HepG2 (cell line): ENCODE measurements at regions of chr5 and their contacts with region 1.

Region 1: DNA sequence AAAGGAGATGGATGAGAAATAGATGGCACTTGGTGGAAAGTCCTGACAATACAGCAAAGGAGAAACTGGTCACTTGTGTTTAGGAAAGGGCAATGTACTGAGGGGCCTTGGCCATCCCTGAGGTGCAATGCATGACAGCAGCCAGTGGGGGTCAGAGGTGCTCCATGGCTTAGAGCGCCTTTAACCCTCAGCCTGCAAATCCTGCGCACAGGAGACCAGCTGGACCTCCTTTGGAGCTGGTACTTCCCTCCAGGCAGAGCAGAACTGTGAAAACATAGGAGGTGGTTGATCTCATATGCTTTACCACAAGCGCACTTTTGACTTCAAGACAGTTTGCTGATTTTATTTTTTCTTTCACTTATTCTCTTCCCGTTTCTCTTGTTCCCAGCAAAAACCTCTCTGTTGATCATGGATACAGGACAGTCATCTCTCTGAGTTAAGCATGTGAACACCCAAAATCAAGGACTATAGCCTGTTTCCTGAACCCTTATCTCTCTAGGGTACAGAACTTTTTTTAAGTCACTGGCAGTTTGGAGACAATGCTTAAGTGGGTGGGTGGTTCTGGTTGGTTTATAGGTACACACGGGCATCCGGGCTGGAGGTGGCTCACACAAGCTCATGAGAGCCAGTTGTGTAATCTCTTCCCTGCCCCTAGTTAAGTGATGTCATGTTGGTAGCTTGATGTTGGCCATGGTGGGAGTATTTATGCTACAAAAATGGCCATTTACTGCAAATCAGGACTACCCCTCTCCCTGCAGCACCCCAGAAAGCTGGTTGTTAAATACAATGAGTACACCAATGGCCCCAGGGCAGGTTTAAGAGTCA is 37.6 kb upstream of the ANKRD55 start:
- DNase-seq: peak; percentile 73
- ATAC-seq: peak; percentile 99
- H3K4me3 ChIP-seq: no peak overlapping the region
- H3K27ac ChIP-seq: no peak overlapping the region
- H3K4me1 ChIP-seq: peaks cover 34% of the 10 kb centered on the region
- H3K27me3 ChIP-seq: no peaks in the 10 kb centered on the region
- CTCF ChIP-seq: peak; percentile 97
- EP300 ChIP-seq: no peak
- POLR2A ChIP-seq: no peak
- RAD21 ChIP-seq: peak; percentile 98

Region 2: DNA sequence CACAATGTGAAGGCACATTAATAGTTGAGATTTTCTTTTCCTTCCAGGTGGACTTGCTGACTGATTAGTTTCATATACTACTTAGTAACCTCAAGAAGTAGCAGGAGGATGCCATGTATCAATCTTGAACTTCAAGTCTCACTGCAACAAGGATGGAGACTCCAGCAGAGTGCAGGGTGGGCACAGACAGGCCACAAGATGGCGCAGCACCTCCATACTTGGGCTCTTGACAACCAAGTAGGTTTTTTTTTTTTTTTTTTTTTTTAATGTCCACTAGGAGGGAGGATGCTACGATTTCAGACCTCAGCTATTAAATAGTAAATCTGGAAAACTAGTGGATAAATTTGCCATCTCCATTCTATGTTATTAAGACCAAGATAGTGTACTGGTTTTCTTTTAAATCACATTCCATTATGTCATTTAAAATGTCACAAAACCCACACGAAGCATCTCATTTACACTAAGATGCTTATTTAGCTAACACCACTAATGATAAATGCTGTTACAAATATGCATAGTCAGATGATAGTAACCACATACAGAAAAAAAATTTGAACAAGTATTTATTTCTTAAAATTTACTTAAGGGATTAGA is 334.6 kb before region 1 on chr5:
- CTCF ChIA-PET with region 1: interaction called, 22 read pairs
- POLR2A ChIA-PET with region 1: no interaction called
- in situ Hi-C with region 1: no loop called
- intact Hi-C with region 1: loop called (anchors 1 kb)
- DNase-seq: peak; percentile 65
- ATAC-seq: peak; percentile 12
- H3K4me3 ChIP-seq: no peak overlapping the region
- H3K27ac ChIP-seq: no peak overlapping the region
- H3K4me1 ChIP-seq: peaks cover 49% of the 10 kb centered on the region
- H3K27me3 ChIP-seq: no peaks in the 10 kb centered on the region
- CTCF ChIP-seq: peak; percentile 85
- EP300 ChIP-seq: no peak
- POLR2A ChIP-seq: no peak
- RAD21 ChIP-seq: peak; percentile 65

Region 3: DNA sequence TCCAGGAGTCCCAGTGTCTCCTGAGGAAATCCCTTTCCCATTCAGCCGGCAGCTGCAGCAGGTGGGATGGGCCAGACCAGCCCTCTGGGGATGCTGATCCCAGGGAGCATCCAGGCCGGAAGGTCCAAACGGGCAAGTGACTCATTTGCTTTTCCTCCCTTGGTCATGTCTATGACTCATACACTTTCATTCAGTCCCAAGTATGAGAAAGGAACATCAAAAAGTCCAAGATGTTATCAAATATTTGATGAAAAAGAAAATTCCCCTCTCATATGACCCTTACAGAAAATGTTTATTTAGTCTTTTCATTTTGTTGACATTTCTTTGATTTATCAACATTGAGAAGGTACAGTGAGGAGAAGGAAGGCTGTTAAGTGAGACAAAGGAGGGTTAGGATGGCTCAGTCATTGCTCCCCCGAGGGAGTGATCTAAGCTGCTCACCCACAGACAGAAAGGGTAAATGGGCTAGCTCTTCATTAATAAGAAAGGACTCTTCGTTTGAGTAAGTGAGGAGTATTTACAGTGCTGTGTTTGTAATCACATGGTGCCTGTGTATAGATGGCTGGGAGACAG is 79.9 kb after region 1 on chr5:
- CTCF ChIA-PET with region 1: no interaction called
- POLR2A ChIA-PET with region 1: no interaction called
- in situ Hi-C with region 1: no loop called
- intact Hi-C with region 1: loop called (anchors 2 kb)
- DNase-seq: peak; percentile 92
- ATAC-seq: peak; percentile 95
- H3K4me3 ChIP-seq: no peak overlapping the region
- H3K27ac ChIP-seq: peak overlapping the region; percentile 44
- H3K4me1 ChIP-seq: peaks cover 72% of the 10 kb centered on the region
- H3K27me3 ChIP-seq: no peaks in the 10 kb centered on the region
- CTCF ChIP-seq: no peak
- EP300 ChIP-seq: peak in 1 of 2 experiments; percentile 90; a peak in 2 of 4 replicates
- POLR2A ChIP-seq: no peak
- RAD21 ChIP-seq: no peak

Region 4: GRCh38 chr5:56447232-56447631 is 176.5 kb after region 1 on chr5:
- CTCF ChIA-PET with region 1: no interaction called
- POLR2A ChIA-PET with region 1: no interaction called
- in situ Hi-C with region 1: no loop called
- intact Hi-C with region 1: loop called (anchors 2 kb)
- DNase-seq: peak; percentile 93
- ATAC-seq: peak; percentile 99
- H3K4me3 ChIP-seq: peak overlapping the region in 1 of 3 experiments; percentile 14; a peak in 1 of 6 replicates
- H3K27ac ChIP-seq: peak overlapping the region; percentile 58
- H3K4me1 ChIP-seq: peaks cover 44% of the 10 kb centered on the region
- H3K27me3 ChIP-seq: no peaks in the 10 kb centered on the region
- CTCF ChIP-seq: no peak
- EP300 ChIP-seq: peak in 1 of 2 experiments; percentile 79; a peak in 2 of 4 replicates
- POLR2A ChIP-seq: no peak
- RAD21 ChIP-seq: peak; percentile 40; the same call in 1 of the 2 replicates

Region 5: GRCh38 chr5:56638061-56638621 is 367.4 kb after region 1 on chr5:
- CTCF ChIA-PET with region 1: no interaction called
- POLR2A ChIA-PET with region 1: no interaction called
- in situ Hi-C with region 1: no loop called
- intact Hi-C with region 1: loop called (anchors 1 kb)
- DNase-seq: peak; percentile 94
- ATAC-seq: peak; percentile 92
- H3K4me3 ChIP-seq: peak overlapping the region in 2 of 3 experiments; percentile 24 to 41; a peak in 2 of 6 replicates
- H3K27ac ChIP-seq: peak overlapping the region; percentile 89
- H3K4me1 ChIP-seq: peaks cover 72% of the 10 kb centered on the region
- H3K27me3 ChIP-seq: no peaks in the 10 kb centered on the region
- CTCF ChIP-seq: no peak
- EP300 ChIP-seq: peak in 1 of 2 experiments; percentile 71; a peak in 2 of 4 replicates
- POLR2A ChIP-seq: no peak
- RAD21 ChIP-seq: no peak

Region 6: GRCh38 chr5:56838409-56839039 is 567.7 kb after region 1 on chr5:
- CTCF ChIA-PET with region 1: interaction called, 29 read pairs
- POLR2A ChIA-PET with region 1: interaction called, 3 read pairs
- in situ Hi-C with region 1: loop called (anchors 5 kb)
- intact Hi-C with region 1: loop called (anchors 1 kb)
- DNase-seq: peak; percentile 33
- ATAC-seq: no peak
- H3K4me3 ChIP-seq: no peak overlapping the region
- H3K27ac ChIP-seq: no peak overlapping the region
- H3K4me1 ChIP-seq: peaks cover 53% of the 10 kb centered on the region
- H3K27me3 ChIP-seq: no peaks in the 10 kb centered on the region
- CTCF ChIP-seq: peak; percentile 66
- EP300 ChIP-seq: no peak
- POLR2A ChIP-seq: no peak
- RAD21 ChIP-seq: peak; percentile 56